GM12878 (cell line): ENCODE measurements at regions of chr2 and their contacts with region 1.

Region 1: GRCh38 chr2:113996671-113997594 is 107.0 kb downstream of the ACTR3 start:
- DNase-seq: no peak
- ATAC-seq: peak; percentile 51
- H3K4me3 ChIP-seq: no peak overlapping the region
- H3K27ac ChIP-seq: no peak overlapping the region
- H3K4me1 ChIP-seq: no peaks in the 10 kb centered on the region
- H3K27me3 ChIP-seq: no peaks in the 10 kb centered on the region; a peak in 1 of 4 replicates
- CTCF ChIP-seq: peak in 1 of 3 experiments; percentile 8; a peak in 1 of 6 replicates
- EP300 ChIP-seq: no peak
- POLR2A ChIP-seq: no peak
- RAD21 ChIP-seq: no peak

Region 2: GRCh38 chr2:114156366-114157056 is 159.6 kb after region 1 on chr2:
- CTCF ChIA-PET with region 1: no interaction called
- POLR2A ChIA-PET with region 1: no interaction called
- RAD21 ChIA-PET with region 1: no interaction called
- SMC1A ChIA-PET with region 1: no interaction called
- in situ Hi-C with region 1: no loop called
- intact Hi-C with region 1: no loop called
- DNase-seq: no peak
- ATAC-seq: no peak
- H3K4me3 ChIP-seq: no peak overlapping the region
- H3K27ac ChIP-seq: no peak overlapping the region
- H3K4me1 ChIP-seq: no peaks in the 10 kb centered on the region
- H3K27me3 ChIP-seq: no peaks in the 10 kb centered on the region
- CTCF ChIP-seq: no peak
- EP300 ChIP-seq: no peak
- POLR2A ChIP-seq: no peak
- RAD21 ChIP-seq: no peak

Region 3: DNA sequence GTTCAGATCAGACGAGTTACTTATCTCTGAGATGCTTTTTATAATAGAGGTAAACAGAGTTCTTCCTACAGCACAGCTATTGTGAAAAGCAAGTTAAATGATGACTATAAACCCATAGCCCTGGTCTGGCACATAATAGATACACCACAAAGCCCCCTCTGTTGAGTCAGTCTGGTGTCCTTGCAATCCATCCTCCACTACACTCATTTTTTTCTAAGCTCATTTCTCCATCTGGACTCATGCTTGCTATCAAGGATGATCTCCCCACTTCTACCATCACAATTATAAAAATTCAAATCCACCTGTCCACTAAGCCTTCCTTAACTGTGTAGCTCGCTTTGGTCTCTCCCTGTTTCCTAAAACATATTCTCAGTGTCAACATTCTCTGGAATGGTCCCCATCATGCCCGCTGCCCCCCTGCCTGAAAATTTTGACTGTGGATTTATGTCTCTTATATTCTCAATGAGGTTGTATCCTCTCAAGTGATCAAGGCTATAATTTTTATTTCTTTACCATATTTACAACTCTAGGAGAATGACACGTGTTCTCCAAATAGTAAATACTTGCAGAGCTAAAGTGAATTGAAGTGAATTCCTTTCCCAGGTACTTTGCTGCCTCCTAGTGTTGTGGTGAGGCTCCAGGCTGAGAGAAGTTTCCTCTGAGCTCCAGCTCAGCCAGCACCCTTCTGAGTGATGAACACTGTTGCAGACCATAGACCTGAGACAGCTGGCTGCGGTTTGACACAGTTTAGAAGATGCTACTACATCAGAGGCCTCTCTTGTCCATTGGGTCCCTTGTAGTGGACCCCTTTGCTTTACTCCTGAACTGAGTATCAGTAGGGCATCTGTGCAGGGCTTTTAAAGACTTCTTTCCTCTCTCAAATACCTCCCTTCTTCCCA is 554.2 kb after region 1 on chr2:
- CTCF ChIA-PET with region 1: no interaction called
- POLR2A ChIA-PET with region 1: no interaction called
- RAD21 ChIA-PET with region 1: no interaction called
- SMC1A ChIA-PET with region 1: no interaction called
- in situ Hi-C with region 1: no loop called
- intact Hi-C with region 1: loop called (anchors 10 kb)
- DNase-seq: no peak
- ATAC-seq: peak; percentile 60; the same call in 2 of the 3 replicates
- H3K4me3 ChIP-seq: no peak overlapping the region
- H3K27ac ChIP-seq: no peak overlapping the region
- H3K4me1 ChIP-seq: no peaks in the 10 kb centered on the region
- H3K27me3 ChIP-seq: no peaks in the 10 kb centered on the region
- CTCF ChIP-seq: peak; percentile 43 to 61 (median 46); a peak in 5 of 6 replicates
- EP300 ChIP-seq: no peak
- POLR2A ChIP-seq: no peak
- RAD21 ChIP-seq: peak; percentile 65